ENCODE measurements at regions of chr20 and their contacts with region 1.

Region 1: DNA sequence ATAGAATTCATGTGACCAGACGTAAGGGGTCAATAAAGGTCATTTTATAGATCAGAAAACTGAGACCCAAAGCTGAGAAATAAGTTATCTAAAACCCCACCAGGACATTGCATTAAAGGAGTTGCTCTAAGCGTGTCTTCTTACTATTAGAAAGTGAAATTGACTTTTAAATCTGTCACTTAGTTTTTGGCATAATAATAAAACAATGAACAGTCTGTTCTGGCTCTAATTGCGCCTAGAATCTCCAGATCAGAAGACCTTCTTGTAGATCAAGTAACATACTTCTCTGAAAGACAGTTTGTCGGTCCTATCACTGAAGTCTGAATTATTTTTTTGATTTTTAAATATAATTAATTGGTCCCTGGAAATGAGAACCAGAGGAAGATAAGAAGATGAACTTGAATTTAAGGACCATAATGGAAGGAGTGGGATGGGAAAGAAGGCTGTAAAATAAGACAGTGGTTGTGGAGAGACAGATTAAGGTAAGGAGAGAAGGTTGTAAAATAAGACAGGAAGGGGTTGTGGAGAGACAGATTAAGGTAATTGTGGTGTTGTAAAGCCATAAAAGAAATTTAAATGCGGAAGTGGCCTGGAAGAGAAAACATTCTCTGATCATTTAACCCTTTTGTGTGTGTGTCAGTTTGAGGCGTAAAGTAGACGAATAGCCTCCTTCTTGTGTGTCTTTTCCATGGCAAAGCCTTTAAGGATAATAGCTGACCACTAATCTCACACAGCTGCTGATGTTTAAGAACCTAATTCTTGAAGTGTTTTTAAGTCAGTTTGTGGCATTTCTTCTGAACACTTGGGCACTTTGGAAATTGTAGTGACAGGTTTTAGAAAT is 20.1 kb downstream of the TOP1 start:
- DNase-seq: no peak

Region 2: DNA sequence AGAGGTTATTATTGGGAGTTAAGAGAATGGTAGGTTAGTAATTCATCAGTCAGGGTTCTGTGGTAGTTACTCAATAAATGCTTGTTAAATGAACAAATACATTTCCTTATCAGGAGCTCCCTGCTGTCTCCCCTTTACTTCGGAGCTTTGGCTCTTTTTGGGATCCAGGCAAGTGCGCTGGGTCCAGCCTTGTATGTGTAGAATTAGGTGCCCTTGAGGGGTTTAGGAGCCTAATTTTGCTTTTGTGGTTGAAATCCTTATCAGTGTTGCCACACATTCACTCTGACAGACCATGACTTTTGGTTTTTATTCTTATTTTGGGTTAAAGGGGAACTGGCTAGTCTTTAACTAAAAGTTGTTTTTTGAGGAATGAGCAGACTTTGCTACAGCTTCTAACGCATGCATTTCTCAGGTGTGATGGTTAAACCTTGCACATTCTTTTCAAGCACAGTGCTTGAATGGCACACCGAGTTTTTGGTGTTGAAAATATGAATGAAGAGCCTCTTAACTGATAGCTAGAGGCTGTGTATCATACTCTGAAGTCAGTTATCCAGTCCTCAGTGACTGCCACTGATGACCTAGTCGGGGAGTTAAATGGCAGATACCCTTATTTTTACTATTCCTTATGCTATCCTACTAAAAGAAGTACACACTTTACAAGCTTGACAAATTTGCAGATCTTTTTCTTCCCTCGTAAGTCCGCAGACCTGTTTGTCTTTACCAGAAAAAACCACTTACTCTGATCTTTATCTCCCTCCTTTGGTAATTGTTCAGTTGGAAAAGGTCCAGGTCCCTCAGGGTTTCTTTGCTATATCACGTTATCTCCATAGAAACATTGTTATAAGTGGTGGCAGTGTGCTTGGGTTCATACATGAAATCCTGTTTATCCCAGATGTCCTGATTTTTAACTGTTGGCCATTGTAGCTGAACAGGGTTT is 38.0 kb after region 1 on chr20:
- intact Hi-C with region 1: loop called in 1 of 2 experiments (anchors 1 kb)
- DNase-seq: no peak